Sciatic nerve (tissue), 2 donors: ENCODE measurements at regions of chr7 and their contacts with region 1.

Region 1: GRCh38 chr7:150722431-150722931 is 6.1 kb downstream of the GIMAP1 start:
- DNase-seq: no peak
- ATAC-seq: no peak

Region 2: GRCh38 chr7:151341357-151342101 is 619.0 kb after region 1 on chr7 and contains the start of gene NUB1:
- intact Hi-C with region 1: loop called (anchors 10 kb)
- DNase-seq: peak; percentile 97
- ATAC-seq: peak; percentile 100
- total RNA-seq, gene NUB1: 48.5 TPM